Activated naive CD4-positive, alpha-beta T cell treated with anti-CD3 and anti-CD28 coated beads, Interleukin-2, amount 10 ng/mL, durations not matched to agents 7 days and 5 days (primary cell): ENCODE measurements at regions of chr4 and their contacts with region 1.

Region 1: DNA sequence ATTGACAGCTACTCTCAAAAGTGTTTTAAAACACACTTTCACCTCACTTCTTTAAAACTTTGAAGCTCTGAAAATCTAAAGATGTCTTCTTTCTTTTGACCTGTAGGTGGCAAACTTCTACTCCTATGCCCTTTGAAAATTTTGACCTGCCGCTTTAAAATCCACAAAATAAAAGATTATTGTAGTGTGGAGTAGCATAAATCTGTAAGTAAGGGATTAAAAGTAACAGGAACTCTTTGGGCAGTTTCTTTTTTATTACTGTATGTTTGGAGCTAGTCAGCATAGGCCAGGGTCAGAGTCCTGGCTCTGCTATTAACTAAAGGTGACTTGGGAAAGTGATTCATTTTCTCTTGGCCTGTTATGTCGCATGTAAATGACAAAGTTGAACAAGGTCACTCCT is 25.5 kb downstream of the BBS12 start:
- DNase-seq: no peak
- H3K4me3 Mint-ChIP-seq: no peak overlapping the region
- H3K27ac Mint-ChIP-seq: no peak overlapping the region
- H3K4me1 Mint-ChIP-seq: peaks cover 21% of the 10 kb centered on the region
- H3K27me3 Mint-ChIP-seq: peaks cover 13% of the 10 kb centered on the region

Region 2: DNA sequence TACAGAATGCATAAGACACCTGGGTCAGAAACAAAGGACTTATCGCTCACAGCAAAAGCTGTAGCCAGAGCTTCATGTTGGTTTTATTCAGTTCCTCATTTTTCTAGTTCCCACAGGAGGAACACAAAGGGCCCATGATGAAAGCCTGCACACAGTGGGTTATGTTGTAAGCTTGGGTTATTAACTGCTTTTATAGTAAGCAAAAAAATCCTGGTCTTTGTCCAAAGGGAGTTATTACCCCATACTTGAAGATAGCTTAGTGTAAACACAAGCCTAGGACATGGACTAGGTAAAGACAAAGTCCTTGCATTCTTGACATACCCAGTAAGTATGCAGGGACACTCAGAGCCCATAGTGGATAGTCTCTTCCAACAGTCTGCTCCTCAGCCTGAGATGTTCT is 13.8 kb before region 1 on chr4:
- CTCF ChIA-PET with region 1: interaction called, 34 read pairs
- DNase-seq: no peak
- H3K4me3 Mint-ChIP-seq: no peak overlapping the region
- H3K27ac Mint-ChIP-seq: no peak overlapping the region
- H3K4me1 Mint-ChIP-seq: peaks cover 17% of the 10 kb centered on the region
- H3K27me3 Mint-ChIP-seq: no peaks in the 10 kb centered on the region

Region 3: GRCh38 chr4:122836941-122837340 is 78.9 kb after region 1 on chr4:
- CTCF ChIA-PET with region 1: no interaction called
- DNase-seq: no peak
- H3K4me3 Mint-ChIP-seq: no peak overlapping the region
- H3K27ac Mint-ChIP-seq: no peak overlapping the region
- H3K4me1 Mint-ChIP-seq: no peaks in the 10 kb centered on the region
- H3K27me3 Mint-ChIP-seq: peaks cover 20% of the 10 kb centered on the region

Region 4: DNA sequence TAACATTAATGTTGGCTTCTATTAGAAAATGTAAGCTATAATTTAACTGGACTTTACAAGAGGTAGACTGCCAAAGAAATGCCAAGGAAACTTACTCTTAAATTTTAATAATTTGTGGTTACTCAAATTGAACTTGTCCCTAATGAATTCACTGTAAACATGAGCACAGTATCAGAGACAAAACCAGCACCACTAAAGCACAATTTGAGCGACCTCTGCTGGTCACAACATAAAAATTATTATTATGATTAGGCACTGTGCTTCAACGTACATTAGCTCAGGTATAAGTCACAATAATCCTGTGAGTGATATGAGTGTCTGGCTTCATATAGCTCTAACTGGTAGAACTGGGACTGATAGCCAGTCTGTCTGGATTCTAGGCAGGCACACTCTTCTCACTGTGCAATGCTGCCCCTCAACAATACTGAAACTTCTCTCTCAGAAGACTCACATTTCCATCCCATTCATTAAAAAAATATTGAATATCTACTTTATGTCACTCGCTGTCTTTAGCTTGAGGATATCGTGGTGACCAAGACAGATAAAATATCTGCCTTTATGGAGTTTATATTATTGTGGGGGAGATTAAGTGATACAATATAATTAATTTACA is 156.4 kb after region 1 on chr4:
- CTCF ChIA-PET with region 1: interaction called, 11 read pairs
- DNase-seq: no peak
- H3K4me3 Mint-ChIP-seq: no peak overlapping the region
- H3K27ac Mint-ChIP-seq: no peak overlapping the region
- H3K4me1 Mint-ChIP-seq: peaks cover 7% of the 10 kb centered on the region
- H3K27me3 Mint-ChIP-seq: no peaks in the 10 kb centered on the region

Region 5: DNA sequence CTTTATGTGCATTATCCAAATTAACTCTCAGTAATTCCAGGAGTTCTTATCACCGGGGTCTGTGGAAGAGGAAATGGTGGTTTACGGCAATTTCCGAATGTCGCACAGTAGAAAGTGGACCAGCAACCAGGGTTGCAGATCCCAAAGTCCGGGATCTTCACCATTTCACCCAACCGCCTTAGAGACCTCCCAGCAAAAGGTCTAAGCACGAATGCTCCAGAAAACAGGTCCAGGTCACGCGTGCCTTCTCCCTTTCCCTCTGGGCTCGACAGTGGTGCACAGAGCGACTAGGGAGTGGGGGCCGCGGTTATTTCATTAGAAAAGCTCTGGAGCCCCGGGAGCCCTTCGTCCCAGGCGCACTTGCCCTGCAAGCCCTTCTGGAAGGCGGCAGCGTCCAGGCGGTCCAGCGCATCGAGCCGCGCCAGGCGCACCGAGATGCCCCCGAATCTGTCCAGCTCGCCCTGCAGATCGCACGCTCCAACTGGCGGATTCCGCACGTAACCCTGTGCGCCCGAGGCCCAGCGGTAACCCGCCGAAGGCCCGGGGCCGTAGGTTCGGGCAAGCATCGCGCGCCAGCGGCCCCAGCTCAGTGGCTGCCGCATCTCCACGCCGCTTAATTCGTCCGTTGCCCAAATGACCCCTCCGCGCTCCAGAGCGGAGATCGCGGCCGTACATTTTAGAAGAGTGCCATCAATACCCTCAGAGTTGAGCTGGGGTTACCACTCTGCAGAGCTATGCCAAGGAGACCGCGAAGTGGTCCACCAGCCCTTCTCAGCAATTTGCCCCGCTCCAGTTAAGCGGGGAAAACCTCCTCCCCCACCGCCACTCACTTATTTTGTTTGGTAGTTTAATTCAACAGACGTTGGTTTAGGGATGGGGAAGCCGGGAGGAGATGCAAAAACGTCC is 164.2 kb after region 1 on chr4 and contains the start of gene NUDT6:
- CTCF ChIA-PET with region 1: interaction called, 10 read pairs
- DNase-seq: peak; percentile 67
- H3K4me3 Mint-ChIP-seq: no peak within 1 kb of the TSS
- H3K27ac Mint-ChIP-seq: peak within 1 kb of the TSS; percentile 97
- H3K4me1 Mint-ChIP-seq: peaks cover 32% of the 10 kb centered on the region
- H3K27me3 Mint-ChIP-seq: no peaks in the 10 kb centered on the region

Region 6: DNA sequence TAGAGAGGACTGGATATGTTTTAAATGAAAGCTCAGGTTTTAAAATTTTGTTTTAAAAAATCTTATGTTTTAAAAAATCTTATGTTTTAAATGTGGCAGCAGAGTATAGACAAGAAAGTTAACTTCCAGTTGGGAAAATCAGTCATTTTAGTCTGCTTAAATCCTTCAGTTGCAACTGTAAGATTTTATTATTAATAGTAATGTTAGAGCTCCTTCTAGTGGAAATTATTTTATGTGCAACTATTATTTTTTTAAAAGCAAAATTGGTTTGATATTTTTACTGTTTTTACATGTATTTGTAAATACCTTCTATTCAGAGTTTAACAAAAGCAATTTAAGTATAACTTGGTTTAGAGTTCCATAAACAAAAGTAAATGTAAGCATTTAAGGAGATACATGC is 172.8 kb after region 1 on chr4:
- CTCF ChIA-PET with region 1: interaction called, 22 read pairs
- DNase-seq: no peak
- H3K4me3 Mint-ChIP-seq: no peak overlapping the region
- H3K27ac Mint-ChIP-seq: no peak overlapping the region
- H3K4me1 Mint-ChIP-seq: peaks cover 30% of the 10 kb centered on the region
- H3K27me3 Mint-ChIP-seq: no peaks in the 10 kb centered on the region